ENCODE measurements at regions of chr14 and their contacts with region 1.

Region 1: DNA sequence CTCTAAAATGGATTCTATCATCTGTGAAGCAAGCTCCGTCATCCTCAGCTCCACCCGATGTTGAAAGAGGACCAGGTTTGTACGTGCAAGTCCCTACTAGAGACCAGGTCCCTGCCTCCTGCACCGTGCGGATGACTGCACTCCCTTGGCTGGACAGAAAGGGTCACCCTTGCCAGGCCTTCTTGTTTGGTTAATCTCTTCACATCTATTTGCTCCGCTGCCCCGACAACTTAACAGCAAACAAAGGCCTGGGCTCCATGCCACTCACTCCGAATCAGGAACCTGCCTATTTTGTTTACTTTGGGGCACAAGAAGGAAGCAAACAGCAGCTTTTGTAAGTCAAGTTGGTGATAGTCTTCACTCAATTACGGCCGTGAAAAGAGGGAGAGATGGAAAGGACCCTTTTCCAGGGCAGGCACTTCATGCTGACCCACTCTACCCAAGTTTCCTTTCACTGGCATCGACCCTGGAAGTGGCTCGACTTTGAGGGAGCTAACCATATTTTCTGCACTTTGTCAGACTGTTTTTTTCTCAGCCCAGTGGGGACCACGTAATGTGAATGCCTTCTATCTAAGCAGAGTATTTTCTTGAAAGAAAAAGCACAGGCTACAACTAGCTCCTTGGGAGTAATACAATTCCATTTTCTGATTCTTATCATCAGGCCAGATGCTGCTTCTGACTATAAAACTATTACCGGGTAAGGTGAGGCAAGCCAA is 202.7 kb downstream of the FOXN3 start:
- DNase-seq: peak; percentile 69 to 87 (median 73)
- ATAC-seq: peak; percentile 93 to 97 (median 96)
- H3K4me3 ChIP-seq: no peak overlapping the region
- H3K27ac ChIP-seq: peak overlapping the region in 7 of 12 donors; percentile 0 to 61 (median 53)
- H3K4me1 ChIP-seq: peaks cover 0 to 51% (median 22%) of the 10 kb centered on the region in 12 donors
- H3K27me3 ChIP-seq: no peaks in the 10 kb centered on the region
- CTCF ChIP-seq: peak in 9 of 12 donors; percentile 8 to 46 (median 30)
- POLR2A ChIP-seq: no peak

Region 2: GRCh38 chr14:89178802-89179535 is 35.4 kb before region 1 on chr14:
- intact Hi-C with region 1: no loop called
- DNase-seq: no peak
- ATAC-seq: no peak
- H3K4me3 ChIP-seq: no peak overlapping the region
- H3K27ac ChIP-seq: peak overlapping the region in 2 of 12 donors; percentile 19 to 38
- H3K4me1 ChIP-seq: peaks cover 0 to 43% (median 27%) of the 10 kb centered on the region in 12 donors
- H3K27me3 ChIP-seq: no peaks in the 10 kb centered on the region
- CTCF ChIP-seq: no peak
- POLR2A ChIP-seq: no peak

Region 3: GRCh38 chr14:89303457-89304435 is 89.4 kb after region 1 on chr14:
- intact Hi-C with region 1: loop called in 1 of 10 experiments (anchors 10 kb)
- DNase-seq: peak in 4 of 5 donors; percentile 54 to 76 (median 68)
- ATAC-seq: peak; percentile 79 to 89 (median 85)
- H3K4me3 ChIP-seq: peak overlapping the region in 9 of 12 donors; percentile 13 to 38 (median 29)
- H3K27ac ChIP-seq: peak overlapping the region; percentile 63 to 95 (median 91)
- H3K4me1 ChIP-seq: peaks cover 10 to 63% (median 43%) of the 10 kb centered on the region in 12 donors
- H3K27me3 ChIP-seq: no peaks in the 10 kb centered on the region
- CTCF ChIP-seq: no peak
- POLR2A ChIP-seq: no peak

Region 4: DNA sequence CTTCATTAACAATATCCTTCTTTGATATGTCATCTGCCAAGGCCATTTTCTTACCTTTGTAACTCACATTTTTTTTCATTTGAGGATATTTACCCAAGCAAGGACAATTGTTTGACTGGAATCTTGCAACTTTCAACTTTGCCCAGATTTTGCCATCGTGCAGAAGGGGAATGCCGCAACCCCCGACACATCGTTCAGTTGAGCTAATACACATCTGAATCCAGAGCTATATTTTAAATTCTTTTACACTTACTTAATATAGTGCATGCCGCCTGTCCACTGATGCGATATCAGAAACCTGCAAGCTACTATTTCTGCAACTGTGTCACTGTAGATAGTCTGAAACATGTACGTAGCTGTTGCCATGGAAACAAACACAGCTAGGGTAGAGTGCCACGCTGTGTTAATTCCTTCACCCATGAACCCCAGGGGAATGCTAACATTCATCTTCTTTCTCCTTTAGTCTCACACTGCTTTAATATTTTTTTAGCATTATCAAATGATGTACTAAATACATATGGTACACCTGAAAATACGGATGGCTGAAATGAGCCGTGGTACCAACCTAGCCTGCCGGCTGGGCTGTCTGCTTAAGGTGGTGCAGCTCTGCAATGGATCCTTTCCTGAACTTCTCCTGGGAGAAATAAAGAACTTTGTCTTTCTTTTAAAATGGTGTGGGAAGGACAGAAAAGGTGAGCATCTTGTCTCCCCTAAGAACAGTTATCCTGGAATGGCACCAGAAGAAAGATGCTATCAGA is 279.7 kb after region 1 on chr14:
- intact Hi-C with region 1: loop called in 1 of 10 experiments (anchors 10 kb)
- DNase-seq: no peak
- ATAC-seq: peak; percentile 49 to 72 (median 64)
- H3K4me3 ChIP-seq: peak overlapping the region in 2 of 12 donors; percentile 4 to 18
- H3K27ac ChIP-seq: no peak overlapping the region
- H3K4me1 ChIP-seq: peaks cover 0 to 31% (median 13%) of the 10 kb centered on the region in 12 donors
- H3K27me3 ChIP-seq: no peaks in the 10 kb centered on the region
- CTCF ChIP-seq: no peak
- POLR2A ChIP-seq: no peak